GM12878 (cell line): ENCODE measurements at regions of chr20 and their contacts with region 1.

Region 1: GRCh38 chr20:46099491-46100287 is 9.9 kb upstream of the NCOA5 start:
- DNase-seq: no peak
- ATAC-seq: peak; percentile 99
- H3K4me3 ChIP-seq: peak overlapping the region; percentile 45; the same call in 1 of the 2 replicates
- H3K27ac ChIP-seq: no peak overlapping the region
- H3K4me1 ChIP-seq: peaks cover 9% of the 10 kb centered on the region; the same call in 1 of the 2 replicates
- H3K27me3 ChIP-seq: no peaks in the 10 kb centered on the region; a peak in 1 of 4 replicates
- CTCF ChIP-seq: peak; percentile 35 to 68 (median 64); a peak in 4 of 6 replicates
- EP300 ChIP-seq: no peak
- POLR2A ChIP-seq: no peak
- RAD21 ChIP-seq: peak; percentile 65

Region 2: DNA sequence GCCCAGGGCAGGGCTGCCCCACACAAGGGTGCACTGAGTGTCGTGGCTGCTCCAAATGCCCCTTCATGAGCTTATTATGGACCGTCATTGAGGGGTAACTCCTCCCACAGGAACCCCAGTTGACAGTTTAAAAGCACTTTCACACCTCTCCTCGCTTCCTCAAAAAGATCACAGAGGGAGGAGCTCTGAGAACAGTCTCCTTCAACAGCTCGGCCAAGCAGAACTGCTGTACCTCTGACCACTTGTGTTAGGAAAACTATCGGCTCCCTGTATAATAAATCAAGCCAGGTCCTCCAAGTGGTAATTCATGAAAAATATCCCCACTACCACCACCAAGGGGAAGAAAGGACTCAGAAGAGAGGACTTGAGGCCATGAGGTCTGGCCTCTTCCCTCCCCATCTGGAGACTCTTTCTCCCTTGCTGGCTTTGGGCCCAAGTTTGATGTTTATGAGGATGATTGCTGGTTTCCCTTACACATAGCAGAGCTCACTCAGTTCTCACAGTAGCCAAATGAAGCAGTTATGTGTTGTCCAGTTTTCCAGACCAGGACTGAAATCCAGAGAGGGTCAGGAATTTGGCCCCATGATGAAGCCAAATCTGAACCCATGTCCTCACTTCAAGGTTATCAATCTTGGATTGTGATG is 257.4 kb before region 1 on chr20:
- CTCF ChIA-PET with region 1: no interaction called
- POLR2A ChIA-PET with region 1: no interaction called
- RAD21 ChIA-PET with region 1: no interaction called
- SMC1A ChIA-PET with region 1: no interaction called
- in situ Hi-C with region 1: no loop called
- intact Hi-C with region 1: no loop called
- DNase-seq: peak; percentile 33
- ATAC-seq: peak; percentile 98
- H3K4me3 ChIP-seq: no peak overlapping the region
- H3K27ac ChIP-seq: peak overlapping the region; percentile 63
- H3K4me1 ChIP-seq: peaks cover 14% of the 10 kb centered on the region
- H3K27me3 ChIP-seq: no peaks in the 10 kb centered on the region
- CTCF ChIP-seq: no peak
- EP300 ChIP-seq: no peak
- POLR2A ChIP-seq: no peak
- RAD21 ChIP-seq: no peak

Region 3: DNA sequence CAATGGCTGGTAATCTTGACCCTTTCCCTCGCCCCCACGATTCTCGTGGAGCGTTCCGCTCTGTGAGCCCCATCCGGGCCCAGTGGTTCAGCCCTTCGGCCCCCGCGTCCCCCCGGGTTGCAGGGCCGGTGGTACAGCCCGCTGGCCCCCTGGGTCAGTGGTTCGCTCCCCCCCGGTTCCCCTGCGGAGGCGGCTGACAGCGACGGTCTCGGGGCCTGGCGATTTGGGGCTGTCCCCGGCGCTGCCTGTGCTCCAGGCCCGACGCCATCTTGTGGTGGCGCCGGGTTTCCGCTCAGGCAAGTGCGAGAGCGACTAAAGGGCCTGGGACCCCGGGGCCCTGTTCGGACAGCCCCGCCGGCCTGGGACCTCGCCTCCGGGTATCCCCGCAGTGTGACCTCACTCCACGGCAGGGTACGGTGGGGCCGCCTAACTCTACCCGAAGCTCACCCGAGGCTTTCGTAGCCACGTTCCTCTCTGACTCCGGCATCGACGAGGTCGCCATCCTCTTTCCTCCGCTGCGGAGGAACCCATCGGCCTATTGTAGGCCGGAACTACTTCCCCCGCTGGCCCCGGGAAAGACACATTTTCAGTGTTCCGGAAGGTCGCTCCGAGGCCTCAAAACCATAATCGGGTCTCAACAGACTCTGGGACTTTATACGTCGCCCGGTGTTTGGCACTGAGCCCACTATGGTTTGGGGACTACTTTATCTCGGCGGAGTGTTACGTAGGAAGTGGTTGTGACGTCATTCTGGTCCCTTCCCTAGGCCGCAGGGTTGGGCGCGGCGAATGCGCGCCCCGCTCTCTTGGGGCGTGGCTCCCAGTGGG is 127.8 kb before region 1 on chr20 and contains the start of gene ZNF335:
- CTCF ChIA-PET with region 1: no interaction called
- POLR2A ChIA-PET with region 1: no interaction called
- RAD21 ChIA-PET with region 1: no interaction called
- SMC1A ChIA-PET with region 1: no interaction called
- in situ Hi-C with region 1: no loop called
- intact Hi-C with region 1: no loop called
- DNase-seq: peak; percentile 86
- ATAC-seq: peak; percentile 78
- H3K4me3 ChIP-seq: peak within 1 kb of the TSS; percentile 81
- H3K27ac ChIP-seq: peak within 1 kb of the TSS; percentile 97
- H3K4me1 ChIP-seq: peaks cover 5% of the 10 kb centered on the region
- H3K27me3 ChIP-seq: no peaks in the 10 kb centered on the region
- CTCF ChIP-seq: peak in 1 of 3 experiments; percentile 27; a peak in 1 of 6 replicates
- EP300 ChIP-seq: peak; percentile 13 to 58; a peak in 3 of 4 replicates
- POLR2A ChIP-seq: peak; percentile 88
- RAD21 ChIP-seq: no peak
- polyA plus RNA-seq, gene ZNF335: 0.74 to 1.2 TPM

Region 4: GRCh38 chr20:46060301-46060881 is 39.3 kb before region 1 on chr20:
- CTCF ChIA-PET with region 1: no interaction called
- POLR2A ChIA-PET with region 1: no interaction called
- RAD21 ChIA-PET with region 1: no interaction called
- SMC1A ChIA-PET with region 1: no interaction called
- in situ Hi-C with region 1: no loop called
- intact Hi-C with region 1: no loop called
- DNase-seq: peak; percentile 31
- ATAC-seq: peak; percentile 71
- H3K4me3 ChIP-seq: no peak overlapping the region
- H3K27ac ChIP-seq: no peak overlapping the region
- H3K4me1 ChIP-seq: peaks cover 22% of the 10 kb centered on the region; the same call in 1 of the 2 replicates
- H3K27me3 ChIP-seq: no peaks in the 10 kb centered on the region
- CTCF ChIP-seq: no peak
- EP300 ChIP-seq: no peak
- POLR2A ChIP-seq: no peak; the same call in 1 of the 2 replicates
- RAD21 ChIP-seq: no peak

Region 5: GRCh38 chr20:46078954-46079353 is 20.7 kb before region 1 on chr20:
- CTCF ChIA-PET with region 1: no interaction called
- POLR2A ChIA-PET with region 1: no interaction called
- RAD21 ChIA-PET with region 1: no interaction called
- SMC1A ChIA-PET with region 1: no interaction called
- in situ Hi-C with region 1: no loop called
- intact Hi-C with region 1: no loop called
- DNase-seq: no peak
- ATAC-seq: no peak
- H3K4me3 ChIP-seq: no peak overlapping the region
- H3K27ac ChIP-seq: no peak overlapping the region
- H3K4me1 ChIP-seq: no peaks in the 10 kb centered on the region
- H3K27me3 ChIP-seq: no peaks in the 10 kb centered on the region
- CTCF ChIP-seq: no peak
- EP300 ChIP-seq: no peak
- POLR2A ChIP-seq: no peak; the same call in 1 of the 2 replicates
- RAD21 ChIP-seq: no peak

Region 6: GRCh38 chr20:46111028-46111835 is 11.5 kb after region 1 on chr20:
- CTCF ChIA-PET with region 1: interaction called, 13 read pairs
- POLR2A ChIA-PET with region 1: interaction called, 3 read pairs
- RAD21 ChIA-PET with region 1: interaction called, 5 read pairs
- SMC1A ChIA-PET with region 1: interaction called, 11 read pairs
- in situ Hi-C with region 1: no loop called
- intact Hi-C with region 1: no loop called
- DNase-seq: peak; percentile 75
- ATAC-seq: peak; percentile 77
- H3K4me3 ChIP-seq: peak overlapping the region; percentile 7; the same call in 1 of the 2 replicates
- H3K27ac ChIP-seq: no peak overlapping the region
- H3K4me1 ChIP-seq: peaks cover 37% of the 10 kb centered on the region
- H3K27me3 ChIP-seq: no peaks in the 10 kb centered on the region
- CTCF ChIP-seq: no peak
- EP300 ChIP-seq: peak; percentile 33 to 51; a peak in 2 of 4 replicates
- POLR2A ChIP-seq: no peak
- RAD21 ChIP-seq: no peak

Region 7: DNA sequence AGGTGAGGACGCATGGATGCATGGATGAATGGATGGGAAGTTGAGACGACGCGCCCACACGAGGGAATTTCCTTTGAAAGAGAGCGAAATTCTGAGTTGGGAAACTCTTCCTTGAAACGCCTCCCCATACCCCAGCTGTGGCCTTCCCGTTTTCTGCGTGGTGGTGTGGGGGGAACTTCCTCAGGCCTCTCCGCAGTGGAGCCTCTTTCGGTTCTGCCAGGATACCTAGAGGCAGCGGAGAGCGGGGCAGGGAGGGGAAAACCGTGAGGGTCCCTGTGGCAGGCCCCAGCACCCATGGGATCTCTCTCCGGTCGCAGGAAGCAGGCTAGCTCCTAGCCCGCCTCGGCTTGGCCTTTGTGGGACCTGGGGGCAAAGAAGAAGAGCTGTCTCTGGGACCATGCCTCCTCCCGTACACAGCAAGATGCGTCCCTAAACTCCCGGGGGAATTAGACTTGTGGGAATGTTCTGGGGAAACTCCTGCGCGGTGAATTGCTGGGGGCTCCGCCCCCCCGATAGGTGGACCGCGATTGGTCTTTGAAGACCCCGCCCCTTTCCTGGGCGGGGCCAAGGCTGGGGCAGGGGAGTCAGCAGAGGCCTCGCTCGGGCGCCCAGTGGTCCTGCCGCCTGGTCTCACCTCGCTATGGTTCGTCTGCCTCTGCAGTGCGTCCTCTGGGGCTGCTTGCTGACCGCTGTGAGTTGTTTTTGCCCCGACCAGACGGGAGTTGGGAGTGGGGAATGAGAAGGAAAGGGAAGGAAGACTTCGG is 18.2 kb after region 1 on chr20 and contains the start of gene CD40:
- CTCF ChIA-PET with region 1: interaction called, 18 read pairs
- POLR2A ChIA-PET with region 1: interaction called, 4 read pairs
- RAD21 ChIA-PET with region 1: interaction called, 6 read pairs
- SMC1A ChIA-PET with region 1: interaction called, 11 read pairs
- in situ Hi-C with region 1: no loop called
- intact Hi-C with region 1: no loop called
- DNase-seq: peak; percentile 76
- ATAC-seq: peak; percentile 90
- H3K4me3 ChIP-seq: peak within 1 kb of the TSS; percentile 96
- H3K27ac ChIP-seq: peak within 1 kb of the TSS; percentile 76
- H3K4me1 ChIP-seq: peaks cover 6% of the 10 kb centered on the region
- H3K27me3 ChIP-seq: no peaks in the 10 kb centered on the region
- CTCF ChIP-seq: no peak
- EP300 ChIP-seq: 0 out of 4 replicates have a peak, but pooled peaks of 1 of the 2 experiments have one; percentile 26
- POLR2A ChIP-seq: peak; percentile 97
- RAD21 ChIP-seq: no peak
- polyA plus RNA-seq, gene CD40: 40.8 to 71.7 TPM